GM23248 (cell line): ENCODE measurements at regions of chr1 and their contacts with region 1.

Region 1: DNA sequence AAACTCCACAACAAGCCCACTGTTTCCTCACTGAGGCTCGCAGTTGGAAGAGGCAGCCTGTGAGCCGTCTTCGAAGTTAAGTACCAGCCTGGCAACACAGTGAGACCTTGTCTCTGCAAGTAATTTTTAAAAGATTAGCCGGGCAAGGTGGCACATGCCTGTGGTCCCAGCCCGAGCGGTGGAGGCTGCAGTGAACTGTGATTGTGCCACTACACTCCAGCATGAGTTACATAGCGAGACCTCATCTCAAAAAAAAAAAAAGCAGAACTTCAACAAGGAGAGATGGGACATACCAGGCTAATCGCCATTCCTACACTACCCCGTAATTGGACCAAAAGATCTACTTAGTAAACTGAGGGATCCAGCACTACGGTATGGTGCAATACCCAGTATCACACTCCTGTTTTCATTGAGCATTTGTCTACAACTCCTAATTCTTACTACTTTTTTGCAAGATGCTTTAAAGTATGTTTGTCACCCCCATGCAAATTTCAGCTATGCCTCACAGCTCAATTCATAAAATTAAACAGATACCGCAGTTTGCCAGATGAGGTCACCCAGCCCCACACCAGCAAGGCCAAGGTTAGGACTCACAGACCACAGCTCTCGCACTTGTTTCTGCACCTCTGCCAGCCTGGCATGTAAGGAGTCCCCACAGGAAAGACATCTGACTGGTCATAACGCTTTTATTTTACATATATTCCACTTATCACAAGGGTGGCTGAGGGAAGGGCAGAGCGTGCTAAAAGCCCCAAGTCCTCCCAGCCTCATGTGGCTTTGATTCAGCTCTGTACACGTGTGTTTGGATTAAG is 21.0 kb downstream of the SDE2 start:
- DNase-seq: no peak
- H3K4me3 ChIP-seq: no peak overlapping the region
- H3K27ac ChIP-seq: no peak overlapping the region
- H3K4me1 ChIP-seq: no peaks in the 10 kb centered on the region
- H3K27me3 ChIP-seq: no peaks in the 10 kb centered on the region

Region 2: GRCh38 chr1:225480825-225481434 is 497.2 kb before region 1 on chr1:
- in situ Hi-C with region 1: loop called (anchors 5 kb)
- DNase-seq: peak; percentile 49
- H3K4me3 ChIP-seq: no peak overlapping the region
- H3K27ac ChIP-seq: no peak overlapping the region
- H3K4me1 ChIP-seq: peaks cover 22% of the 10 kb centered on the region
- H3K27me3 ChIP-seq: no peaks in the 10 kb centered on the region

Region 3: DNA sequence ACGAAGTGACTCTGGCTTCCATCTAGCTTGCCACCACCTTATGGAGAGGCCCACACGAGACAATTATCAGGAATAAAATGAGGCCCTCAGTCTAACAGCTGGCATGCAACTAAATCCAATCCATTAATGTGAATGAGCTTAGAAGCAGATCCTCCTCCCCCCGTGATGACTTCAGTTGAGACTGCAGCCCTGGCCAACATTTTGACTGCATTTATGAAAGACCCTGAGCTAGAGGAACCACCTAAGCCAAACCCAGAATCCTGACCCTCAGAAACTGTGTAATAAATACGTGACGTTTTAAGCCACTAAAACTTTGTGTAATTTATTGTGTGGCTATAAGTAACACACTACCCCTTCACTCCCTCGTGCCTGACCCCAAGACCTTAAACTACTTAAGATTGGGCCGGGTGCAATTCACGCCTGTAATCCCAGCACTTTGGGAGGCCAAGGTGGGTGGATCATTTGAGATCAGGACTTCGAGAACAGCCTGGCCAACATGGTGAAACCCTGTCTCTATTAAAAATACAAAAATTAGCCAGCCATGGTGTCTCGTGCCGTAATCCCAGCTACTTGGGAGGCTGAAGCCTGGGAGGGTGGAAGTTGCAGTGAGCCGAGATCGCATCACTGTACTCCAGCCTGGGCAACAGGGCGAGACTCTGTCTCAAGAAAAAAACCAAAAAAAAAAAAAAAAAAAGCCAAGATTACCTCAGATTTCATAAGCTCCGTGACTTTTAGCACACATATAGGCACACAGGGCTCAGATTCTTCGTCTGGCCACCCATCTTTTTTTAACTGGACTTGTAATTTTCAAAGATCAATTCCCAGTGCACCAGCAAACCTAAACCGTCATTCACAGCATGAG is 397.7 kb before region 1 on chr1:
- in situ Hi-C with region 1: no loop called
- DNase-seq: no peak
- H3K4me3 ChIP-seq: no peak overlapping the region
- H3K27ac ChIP-seq: no peak overlapping the region
- H3K4me1 ChIP-seq: peaks cover 27% of the 10 kb centered on the region
- H3K27me3 ChIP-seq: no peaks in the 10 kb centered on the region

Region 4: GRCh38 chr1:225851805-225852204 is 126.3 kb before region 1 on chr1:
- in situ Hi-C with region 1: loop called (anchors 10 kb)
- DNase-seq: no peak
- H3K4me3 ChIP-seq: no peak overlapping the region
- H3K27ac ChIP-seq: no peak overlapping the region
- H3K4me1 ChIP-seq: no peaks in the 10 kb centered on the region
- H3K27me3 ChIP-seq: no peaks in the 10 kb centered on the region